MCF 10A (cell line): ENCODE measurements at regions of chr18 and their contacts with region 1.

Region 1: GRCh38 chr18:50356036-50356945 is 18.6 kb upstream of the SKA1 start:
- DNase-seq: peak; percentile 71
- H3K4me3 Mint-ChIP-seq: no peak overlapping the region
- H3K27ac Mint-ChIP-seq: peak overlapping the region; percentile 78
- H3K4me1 Mint-ChIP-seq: peaks cover 15% of the 10 kb centered on the region
- H3K27me3 Mint-ChIP-seq: peaks cover 28% of the 10 kb centered on the region
- CTCF ChIP-seq: no peak

Region 2: DNA sequence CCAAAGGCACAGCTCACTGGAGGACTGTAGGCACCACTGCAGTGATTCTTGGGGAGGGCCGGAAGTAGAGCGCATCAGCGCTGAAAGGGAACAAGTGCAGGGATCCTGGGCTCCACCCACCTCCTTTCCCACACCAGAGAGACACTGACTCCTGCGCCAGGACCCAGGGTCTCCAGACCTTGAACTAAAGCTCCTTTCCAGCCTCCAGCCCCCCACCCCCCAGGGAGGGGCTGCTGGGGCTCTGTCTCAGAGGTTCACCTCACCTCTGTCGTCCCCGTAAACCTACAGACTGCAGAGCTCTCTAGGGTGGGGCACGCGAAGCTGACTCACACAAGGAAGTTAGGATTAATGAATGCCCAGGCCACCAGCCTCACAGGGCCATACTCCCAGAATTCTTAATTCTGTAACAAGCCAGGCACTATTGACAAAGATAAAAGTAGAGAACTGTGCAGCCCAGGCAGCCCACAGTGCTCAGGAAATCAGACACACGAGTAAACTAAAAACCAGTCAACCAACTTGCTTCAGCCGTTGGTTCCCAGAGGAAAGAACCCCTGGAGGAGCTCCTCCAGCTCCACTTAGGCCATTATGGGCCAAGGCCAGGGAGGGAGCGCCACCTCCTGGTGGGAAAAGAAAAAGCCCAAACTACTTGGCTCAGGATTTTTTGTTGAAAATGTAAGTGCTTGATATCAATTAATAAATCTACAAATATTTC is 497.8 kb before region 1 on chr18:
- CTCF ChIA-PET with region 1: interaction called, 3 read pairs
- POLR2A ChIA-PET with region 1: no interaction called
- intact Hi-C with region 1: loop called (anchors 10 kb)
- DNase-seq: peak; percentile 72
- H3K4me3 Mint-ChIP-seq: no peak overlapping the region
- H3K27ac Mint-ChIP-seq: no peak overlapping the region
- H3K4me1 Mint-ChIP-seq: peaks cover 6% of the 10 kb centered on the region
- H3K27me3 Mint-ChIP-seq: no peaks in the 10 kb centered on the region
- CTCF ChIP-seq: peak; percentile 92

Region 3: DNA sequence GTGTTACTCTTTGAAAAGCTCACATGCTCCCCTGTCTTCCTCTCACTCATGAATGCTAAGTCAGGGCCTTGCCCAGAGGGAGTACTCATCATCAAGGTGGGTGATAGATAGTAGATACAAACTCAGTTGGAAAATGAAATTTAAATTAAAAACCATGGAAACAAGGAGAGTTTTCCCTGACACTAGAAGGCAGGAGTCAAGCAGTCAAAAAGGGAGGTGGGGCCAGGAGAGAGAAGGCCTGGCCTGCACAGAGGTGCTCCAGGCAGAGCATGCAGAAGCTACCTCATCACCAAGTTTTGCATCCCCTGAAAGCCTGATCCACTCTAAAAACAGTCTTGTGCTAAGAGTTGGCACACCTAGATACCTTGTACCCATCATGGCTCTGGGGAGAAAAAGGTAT is 305.0 kb before region 1 on chr18:
- CTCF ChIA-PET with region 1: interaction called, 6 read pairs
- POLR2A ChIA-PET with region 1: no interaction called
- intact Hi-C with region 1: loop called (anchors 5 kb)
- DNase-seq: peak; percentile 41
- H3K4me3 Mint-ChIP-seq: no peak overlapping the region
- H3K27ac Mint-ChIP-seq: no peak overlapping the region
- H3K4me1 Mint-ChIP-seq: no peaks in the 10 kb centered on the region
- H3K27me3 Mint-ChIP-seq: no peaks in the 10 kb centered on the region
- CTCF ChIP-seq: peak; percentile 34

Region 4: GRCh38 chr18:50203801-50204604 is 152.3 kb before region 1 on chr18:
- CTCF ChIA-PET with region 1: interaction called, 45 read pairs
- POLR2A ChIA-PET with region 1: no interaction called
- intact Hi-C with region 1: loop called (anchors 1 kb)
- DNase-seq: peak; percentile 70
- H3K4me3 Mint-ChIP-seq: peak overlapping the region; percentile 37
- H3K27ac Mint-ChIP-seq: no peak overlapping the region
- H3K4me1 Mint-ChIP-seq: no peaks in the 10 kb centered on the region
- H3K27me3 Mint-ChIP-seq: peaks cover 11% of the 10 kb centered on the region
- CTCF ChIP-seq: peak; percentile 68

Region 5: DNA sequence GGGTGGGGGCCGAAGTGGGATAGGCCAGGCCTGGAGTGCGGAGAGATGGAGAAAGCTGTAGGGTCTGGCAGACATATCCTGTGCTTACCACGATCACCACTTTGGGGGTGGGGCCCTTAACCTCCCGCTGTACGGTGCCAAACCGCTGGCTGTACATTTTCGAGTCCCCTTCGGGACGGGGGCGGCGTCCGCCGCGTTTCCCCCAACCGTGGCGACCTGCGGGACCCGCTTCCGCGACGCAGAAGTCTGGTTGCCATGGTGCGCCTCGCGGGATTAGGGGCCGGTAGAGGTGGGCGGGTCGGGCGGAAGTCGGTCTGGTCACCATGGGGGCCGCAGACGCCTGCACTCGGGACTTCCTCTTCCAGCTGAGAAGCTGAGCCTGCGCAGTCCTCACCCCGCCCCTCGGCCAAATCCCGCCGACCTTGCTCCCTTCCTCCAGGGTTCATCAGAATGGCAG is 90.0 kb before region 1 on chr18 and contains the start of gene CFAP53:
- CTCF ChIA-PET with region 1: interaction called, 15 read pairs
- POLR2A ChIA-PET with region 1: interaction called, 3 read pairs
- intact Hi-C with region 1: no loop called
- DNase-seq: no peak
- H3K4me3 Mint-ChIP-seq: peak within 1 kb of the TSS; percentile 62
- H3K27ac Mint-ChIP-seq: no peak within 1 kb of the TSS
- H3K4me1 Mint-ChIP-seq: peaks cover 4% of the 10 kb centered on the region
- H3K27me3 Mint-ChIP-seq: no peaks in the 10 kb centered on the region
- CTCF ChIP-seq: no peak
- total RNA-seq, gene CFAP53: 2.2 and 5.0 TPM in 2 replicates

Region 6: GRCh38 chr18:50287441-50288347 is 68.6 kb before region 1 on chr18 and contains the start of gene CXXC1:
- CTCF ChIA-PET with region 1: interaction called, 15 read pairs
- POLR2A ChIA-PET with region 1: interaction called, 9 read pairs
- intact Hi-C with region 1: loop called (anchors 1 kb)
- DNase-seq: peak; percentile 99
- H3K4me3 Mint-ChIP-seq: peak within 1 kb of the TSS; percentile 86
- H3K27ac Mint-ChIP-seq: peak within 1 kb of the TSS; percentile 90
- H3K4me1 Mint-ChIP-seq: peaks cover 33% of the 10 kb centered on the region
- H3K27me3 Mint-ChIP-seq: no peaks in the 10 kb centered on the region
- CTCF ChIP-seq: peak; percentile 30
- total RNA-seq, gene CXXC1: 65.1 and 85.4 TPM in 2 replicates

Region 7: GRCh38 chr18:50429207-50429948 is 73.1 kb after region 1 on chr18:
- CTCF ChIA-PET with region 1: interaction called, 13 read pairs
- POLR2A ChIA-PET with region 1: interaction called, 6 read pairs
- intact Hi-C with region 1: no loop called
- DNase-seq: peak; percentile 46
- H3K4me3 Mint-ChIP-seq: no peak overlapping the region
- H3K27ac Mint-ChIP-seq: no peak overlapping the region
- H3K4me1 Mint-ChIP-seq: no peaks in the 10 kb centered on the region
- H3K27me3 Mint-ChIP-seq: no peaks in the 10 kb centered on the region
- CTCF ChIP-seq: peak; percentile 45